CD4-positive, alpha-beta memory T cell (primary cell): ENCODE measurements at regions of chr14 and their contacts with region 1.

Region 1: GRCh38 chr14:88824314-88825077 is at the start of gene TTC8:
- DNase-seq: peak; percentile 88 to 92 (median 90)
- H3K4me3 ChIP-seq: peak within 1 kb of the TSS; percentile 60 to 67
- H3K4me3 Mint-ChIP-seq: peak within 1 kb of the TSS; percentile 86 to 95 (median 90)
- H3K27ac ChIP-seq: peak within 1 kb of the TSS; percentile 66
- H3K27ac Mint-ChIP-seq: peak within 1 kb of the TSS; percentile 97 to 100 (median 99)
- H3K4me1 ChIP-seq: peaks cover 11% of the 10 kb centered on the region
- H3K4me1 Mint-ChIP-seq: peaks cover 5 to 14% (median 11%) of the 10 kb centered on the region in 4 donors
- H3K27me3 ChIP-seq: no peaks in the 10 kb centered on the region
- H3K27me3 Mint-ChIP-seq: peaks cover 0 to 8% of the 10 kb centered on the region in 2 donors
- total RNA-seq, gene TTC8: 1.4 to 1.5 TPM

Region 2: GRCh38 chr14:88792572-88793258 is 31.8 kb before region 1 on chr14 and contains the start of gene EML5:
- CTCF ChIA-PET with region 1: interaction called, 6 read pairs
- POLR2A ChIA-PET with region 1: interaction called, 28 read pairs
- intact Hi-C with region 1: loop called (anchors 1 kb)
- DNase-seq: peak; percentile 82 to 86 (median 86)
- H3K4me3 ChIP-seq: peak within 1 kb of the TSS; percentile 57 to 86
- H3K4me3 Mint-ChIP-seq: peak within 1 kb of the TSS; percentile 87 to 93 (median 92)
- H3K27ac ChIP-seq: peak within 1 kb of the TSS; percentile 63
- H3K27ac Mint-ChIP-seq: peak within 1 kb of the TSS; percentile 77 to 91 (median 87)
- H3K4me1 ChIP-seq: peaks cover 22% of the 10 kb centered on the region
- H3K4me1 Mint-ChIP-seq: peaks cover 8 to 23% (median 13%) of the 10 kb centered on the region in 4 donors
- H3K27me3 ChIP-seq: no peaks in the 10 kb centered on the region
- H3K27me3 Mint-ChIP-seq: peaks cover 0 to 2% of the 10 kb centered on the region in 2 donors
- total RNA-seq, gene EML5: 5.5 to 5.6 TPM

Region 3: DNA sequence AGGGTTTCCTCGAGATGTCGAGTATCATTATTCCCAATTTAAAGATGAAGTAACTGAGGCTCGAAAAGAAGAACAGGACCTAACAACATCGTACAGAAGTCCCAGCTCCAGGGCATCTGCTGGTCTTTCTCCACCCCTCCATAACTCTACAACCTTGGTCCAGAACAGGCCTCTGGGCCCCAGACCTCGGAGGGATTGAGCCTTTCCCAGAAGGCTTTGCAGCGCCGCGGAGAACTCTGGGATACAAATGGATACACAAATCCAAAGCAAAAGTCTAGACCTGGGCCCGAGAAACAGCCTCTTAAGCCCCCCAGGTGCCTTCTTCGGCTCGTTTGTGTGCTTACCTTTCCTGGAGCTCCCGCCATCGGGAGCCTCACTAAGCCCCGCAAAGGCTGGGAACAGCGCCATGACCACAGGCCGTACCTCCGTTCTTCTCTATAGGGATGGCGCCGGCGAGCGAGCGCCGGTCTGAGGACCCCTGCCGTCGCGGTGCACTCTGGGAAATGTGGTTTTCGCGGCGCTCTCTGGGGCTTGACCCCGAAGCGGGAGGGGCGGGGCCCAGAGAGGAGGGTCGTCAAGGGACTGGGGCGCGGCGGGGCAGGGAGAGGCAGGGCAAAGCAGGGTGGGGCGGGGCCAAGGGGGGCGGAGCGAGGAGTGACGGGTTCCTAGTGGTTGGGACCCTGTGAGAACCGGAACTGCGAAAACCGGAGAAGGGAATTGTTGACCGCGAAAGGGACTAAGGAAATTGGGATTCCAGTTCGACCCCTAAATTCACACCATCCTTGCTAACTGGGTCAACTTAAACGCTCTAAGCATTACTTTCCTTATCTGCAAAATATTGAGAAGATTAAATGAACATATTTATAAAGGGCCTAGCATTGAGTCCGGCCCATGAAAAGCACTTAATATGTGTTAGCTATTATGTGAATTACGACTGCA is 1507.3 kb after region 1 on chr14 and contains the start of gene NRDE2:
- CTCF ChIA-PET with region 1: no interaction called
- POLR2A ChIA-PET with region 1: no interaction called
- intact Hi-C with region 1: loop called (anchors 2 kb)
- DNase-seq: peak; percentile 85 to 87 (median 86)
- H3K4me3 ChIP-seq: peak within 1 kb of the TSS; percentile 63 to 92
- H3K4me3 Mint-ChIP-seq: peak within 1 kb of the TSS; percentile 90 to 96 (median 93)
- H3K27ac ChIP-seq: peak within 1 kb of the TSS; percentile 70
- H3K27ac Mint-ChIP-seq: peak within 1 kb of the TSS; percentile 91 to 97 (median 96)
- H3K4me1 ChIP-seq: peaks cover 15% of the 10 kb centered on the region
- H3K4me1 Mint-ChIP-seq: peaks cover 14 to 38% (median 31%) of the 10 kb centered on the region in 4 donors
- H3K27me3 ChIP-seq: no peaks in the 10 kb centered on the region
- H3K27me3 Mint-ChIP-seq: peaks cover 7% of the 10 kb centered on the region in 2 donors
- total RNA-seq, gene NRDE2: 26.3 to 32.6 TPM